Endothelial cell of umbilical vein (primary cell): ENCODE measurements at regions of chr14 and their contacts with region 1.

Region 1: DNA sequence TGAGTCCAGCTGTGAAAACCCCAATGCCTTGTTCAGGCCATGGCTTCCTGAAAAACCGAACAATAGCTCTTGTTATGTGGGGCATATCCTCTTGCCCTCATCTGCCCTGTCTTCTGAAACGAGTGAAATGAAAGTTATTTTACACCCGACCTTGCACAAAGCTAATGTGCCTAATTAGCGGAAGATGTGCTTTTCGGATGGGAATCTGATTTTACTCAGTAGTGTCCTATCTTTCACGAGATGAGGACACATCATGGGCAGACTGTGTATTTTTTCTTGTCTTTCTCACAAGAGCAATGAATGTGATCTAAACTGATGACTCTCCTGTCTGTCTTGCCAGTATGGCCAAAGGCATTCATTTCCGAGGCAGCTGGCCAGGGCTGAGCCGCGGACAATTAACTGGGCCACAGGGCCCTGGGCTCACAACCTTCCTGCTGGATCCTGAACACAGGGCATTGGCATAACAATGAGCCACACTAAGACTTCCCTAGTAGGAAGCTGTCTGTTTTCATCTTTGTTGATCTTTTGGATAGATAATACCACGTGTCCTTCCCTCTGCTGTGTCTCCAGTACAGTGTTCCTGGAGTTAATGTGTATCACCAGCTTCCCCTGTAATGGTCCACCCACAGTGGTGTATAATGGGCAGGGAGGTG is 86.0 kb upstream of the HIF1A start:
- DNase-seq: peak; percentile 87
- H3K4me3 ChIP-seq: peak overlapping the region in 1 of 3 experiments; percentile 3
- H3K27ac ChIP-seq: peak overlapping the region; percentile 74
- H3K4me1 ChIP-seq: peaks cover 24% of the 10 kb centered on the region
- H3K27me3 ChIP-seq: no peaks in the 10 kb centered on the region
- CTCF ChIP-seq: no peak
- POLR2A ChIP-seq: no peak

Region 2: DNA sequence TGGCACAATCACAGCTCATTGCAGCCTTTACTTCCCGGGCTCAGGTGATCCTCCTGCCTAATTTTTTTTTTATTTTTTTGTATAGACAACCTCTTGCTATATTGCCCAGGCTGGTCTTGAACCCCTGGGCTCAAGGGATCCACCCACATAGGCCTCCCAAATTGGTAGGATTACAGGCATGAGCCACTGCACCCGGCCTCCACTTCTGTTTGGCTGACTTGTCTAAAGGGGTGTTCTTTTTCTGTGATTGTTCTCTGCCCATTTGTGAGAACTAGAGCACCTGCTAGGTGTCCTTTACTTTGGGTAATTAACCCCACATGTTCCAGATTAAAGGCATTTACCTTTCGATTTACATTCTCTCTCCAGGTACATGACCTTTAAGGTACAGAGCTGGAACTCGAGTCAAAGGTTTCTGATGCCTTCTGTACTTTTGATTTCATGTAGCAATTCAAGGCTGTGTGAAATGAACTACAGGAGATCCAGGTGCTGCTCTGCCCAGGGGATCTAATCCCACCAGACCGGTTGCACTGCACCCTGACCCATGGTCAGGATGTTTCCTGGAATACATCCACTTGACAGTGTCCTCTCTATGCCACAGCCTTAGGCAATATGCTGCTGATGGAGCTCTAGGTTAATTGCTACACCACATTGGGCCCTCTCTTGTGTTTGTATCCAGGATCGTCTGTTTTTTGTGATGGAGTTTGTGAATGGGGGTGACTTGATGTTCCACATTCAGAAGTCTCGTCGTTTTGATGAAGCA is 124.3 kb before region 1 on chr14:
- CTCF ChIA-PET with region 1: no interaction called
- POLR2A ChIA-PET with region 1: no interaction called
- dilution Hi-C with region 1: no loop called
- intact Hi-C with region 1: no loop called
- DNase-seq: no peak
- H3K4me3 ChIP-seq: no peak overlapping the region
- H3K27ac ChIP-seq: no peak overlapping the region
- H3K4me1 ChIP-seq: no peaks in the 10 kb centered on the region
- H3K27me3 ChIP-seq: no peaks in the 10 kb centered on the region
- CTCF ChIP-seq: no peak
- POLR2A ChIP-seq: no peak

Region 3: GRCh38 chr14:61653507-61653906 is 44.2 kb after region 1 on chr14:
- CTCF ChIA-PET with region 1: interaction called, 8 read pairs
- POLR2A ChIA-PET with region 1: no interaction called
- dilution Hi-C with region 1: no loop called
- intact Hi-C with region 1: loop called (anchors 1 kb)
- DNase-seq: peak; percentile 92
- H3K4me3 ChIP-seq: no peak overlapping the region
- H3K27ac ChIP-seq: peak overlapping the region; percentile 14
- H3K4me1 ChIP-seq: peaks cover 19% of the 10 kb centered on the region
- H3K27me3 ChIP-seq: no peaks in the 10 kb centered on the region
- CTCF ChIP-seq: no peak
- POLR2A ChIP-seq: no peak

Region 4: DNA sequence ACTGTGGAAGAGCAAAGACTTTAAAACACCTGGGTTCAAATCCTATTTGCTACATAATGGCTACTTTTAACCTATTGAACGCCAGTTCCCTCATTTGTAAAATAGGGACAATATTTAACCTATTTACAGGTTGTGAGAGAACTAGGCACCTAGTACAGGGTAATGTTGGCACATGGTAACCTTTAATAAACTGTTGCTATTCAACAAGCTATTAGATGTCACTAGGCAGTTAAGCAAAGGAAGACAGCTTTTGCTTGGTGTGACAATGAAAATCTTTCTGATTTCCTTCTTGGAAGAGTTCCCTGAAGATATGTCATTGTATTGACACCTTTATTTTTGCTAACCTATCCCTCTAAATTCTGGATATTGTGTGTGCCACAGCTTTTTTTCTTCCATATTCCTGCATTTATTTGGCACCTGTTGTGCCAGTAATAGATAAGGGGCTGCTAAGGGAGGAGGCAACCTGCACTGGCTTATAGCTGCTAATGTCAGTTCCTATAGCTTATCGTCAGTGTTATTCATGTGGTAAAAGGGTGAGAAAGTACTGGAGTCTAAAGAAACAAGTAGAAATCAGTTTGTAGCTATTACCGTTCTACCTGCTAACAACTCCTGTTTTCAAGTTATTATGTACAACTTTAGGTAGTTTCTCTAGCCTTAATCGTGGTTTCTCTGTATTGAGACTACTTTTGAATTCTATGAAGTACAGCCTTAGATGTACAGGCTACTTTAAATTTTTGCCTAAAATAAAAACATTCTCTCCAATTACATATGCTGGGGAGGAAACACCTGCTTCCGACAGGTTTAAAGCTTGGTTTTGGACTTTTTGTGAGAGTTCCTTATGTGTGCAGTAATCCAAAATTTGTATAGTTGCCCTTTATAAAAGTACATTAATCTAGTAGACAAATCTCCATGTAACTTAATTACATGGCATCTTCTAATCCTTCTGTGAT is 110.3 kb after region 1 on chr14:
- CTCF ChIA-PET with region 1: interaction called, 11 read pairs
- POLR2A ChIA-PET with region 1: no interaction called
- dilution Hi-C with region 1: no loop called
- intact Hi-C with region 1: no loop called
- DNase-seq: peak; percentile 55
- H3K4me3 ChIP-seq: no peak overlapping the region
- H3K27ac ChIP-seq: peak overlapping the region; percentile 14
- H3K4me1 ChIP-seq: peaks cover 17% of the 10 kb centered on the region
- H3K27me3 ChIP-seq: no peaks in the 10 kb centered on the region
- CTCF ChIP-seq: no peak
- POLR2A ChIP-seq: no peak